Transverse colon (tissue), 4 donors: ENCODE measurements at regions of chr3 and their contacts with region 1.

Region 1: GRCh38 chr3:36868614-36869436 is 76.0 kb downstream of the TRANK1 start:
- DNase-seq: peak; percentile 37
- H3K4me3 ChIP-seq: no peak overlapping the region
- H3K27ac ChIP-seq: no peak overlapping the region
- H3K4me1 ChIP-seq: no peaks in the 10 kb centered on the region
- H3K27me3 ChIP-seq: no peaks in the 10 kb centered on the region
- CTCF ChIP-seq: peak; percentile 55 to 82 (median 71)
- EP300 ChIP-seq: no peak
- POLR2A ChIP-seq: no peak

Region 2: GRCh38 chr3:36933540-36934296 is 64.9 kb after region 1 on chr3:
- in situ Hi-C with region 1: no loop called
- intact Hi-C with region 1: no loop called
- DNase-seq: no peak
- H3K4me3 ChIP-seq: no peak overlapping the region
- H3K27ac ChIP-seq: no peak overlapping the region
- H3K4me1 ChIP-seq: peaks cover 0 to 5% (median 2%) of the 10 kb centered on the region in 4 donors
- H3K27me3 ChIP-seq: no peaks in the 10 kb centered on the region
- CTCF ChIP-seq: no peak
- EP300 ChIP-seq: no peak
- POLR2A ChIP-seq: no peak

Region 3: DNA sequence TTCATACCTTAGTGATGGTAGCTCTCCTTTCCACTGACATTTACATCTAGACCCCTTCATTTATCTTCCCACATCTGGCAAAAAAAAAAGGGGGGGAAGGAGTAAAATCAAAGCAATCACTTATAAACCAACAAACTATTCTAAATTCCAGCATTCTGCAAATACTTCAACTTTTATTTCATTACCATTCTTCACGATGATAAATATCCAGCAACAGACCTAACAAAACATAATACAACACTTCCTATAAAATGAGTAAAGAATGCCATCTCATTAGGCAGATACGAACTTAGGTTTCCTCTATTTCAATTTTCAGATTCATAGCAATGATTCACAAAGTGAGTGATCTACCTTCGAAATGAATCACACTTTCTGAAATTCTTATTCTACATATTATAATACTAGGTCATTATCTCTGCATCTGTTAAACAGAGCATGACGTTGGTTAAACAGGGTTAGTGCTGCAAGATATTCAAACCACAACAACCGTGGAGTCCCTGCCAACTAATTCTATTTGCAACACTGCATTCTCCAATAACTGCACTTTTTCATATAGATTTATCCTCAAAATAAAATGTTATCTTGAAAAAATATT is 305.8 kb after region 1 on chr3 and contains the start of gene LRRFIP2:
- in situ Hi-C with region 1: no loop called
- intact Hi-C with region 1: loop called (anchors 5 kb)
- DNase-seq: no peak
- H3K4me3 ChIP-seq: peak within 1 kb of the TSS; percentile 85 to 99 (median 95)
- H3K27ac ChIP-seq: peak within 1 kb of the TSS; percentile 97 to 100 (median 99)
- H3K4me1 ChIP-seq: peaks cover 32 to 78% (median 56%) of the 10 kb centered on the region in 4 donors
- H3K27me3 ChIP-seq: no peaks in the 10 kb centered on the region
- CTCF ChIP-seq: no peak
- EP300 ChIP-seq: no peak
- POLR2A ChIP-seq: no peak
- total RNA-seq, gene LRRFIP2: 136 to 198 (median 167) TPM